Sigmoid colon (tissue), 7 donors: ENCODE measurements at regions of chr1 and their contacts with region 1.

Region 1: GRCh38 chr1:24070821-24071393 is 41.0 kb downstream of the MYOM3 start:
- DNase-seq: peak; percentile 88
- H3K4me3 ChIP-seq: no peak overlapping the region
- H3K27ac ChIP-seq: no peak overlapping the region
- H3K4me1 ChIP-seq: peaks cover 0 to 8% (median 2%) of the 10 kb centered on the region in 4 donors
- H3K27me3 ChIP-seq: no peaks in the 10 kb centered on the region
- CTCF ChIP-seq: peak; percentile 87 to 92 (median 89)
- EP300 ChIP-seq: no peak
- POLR2A ChIP-seq: no peak

Region 2: DNA sequence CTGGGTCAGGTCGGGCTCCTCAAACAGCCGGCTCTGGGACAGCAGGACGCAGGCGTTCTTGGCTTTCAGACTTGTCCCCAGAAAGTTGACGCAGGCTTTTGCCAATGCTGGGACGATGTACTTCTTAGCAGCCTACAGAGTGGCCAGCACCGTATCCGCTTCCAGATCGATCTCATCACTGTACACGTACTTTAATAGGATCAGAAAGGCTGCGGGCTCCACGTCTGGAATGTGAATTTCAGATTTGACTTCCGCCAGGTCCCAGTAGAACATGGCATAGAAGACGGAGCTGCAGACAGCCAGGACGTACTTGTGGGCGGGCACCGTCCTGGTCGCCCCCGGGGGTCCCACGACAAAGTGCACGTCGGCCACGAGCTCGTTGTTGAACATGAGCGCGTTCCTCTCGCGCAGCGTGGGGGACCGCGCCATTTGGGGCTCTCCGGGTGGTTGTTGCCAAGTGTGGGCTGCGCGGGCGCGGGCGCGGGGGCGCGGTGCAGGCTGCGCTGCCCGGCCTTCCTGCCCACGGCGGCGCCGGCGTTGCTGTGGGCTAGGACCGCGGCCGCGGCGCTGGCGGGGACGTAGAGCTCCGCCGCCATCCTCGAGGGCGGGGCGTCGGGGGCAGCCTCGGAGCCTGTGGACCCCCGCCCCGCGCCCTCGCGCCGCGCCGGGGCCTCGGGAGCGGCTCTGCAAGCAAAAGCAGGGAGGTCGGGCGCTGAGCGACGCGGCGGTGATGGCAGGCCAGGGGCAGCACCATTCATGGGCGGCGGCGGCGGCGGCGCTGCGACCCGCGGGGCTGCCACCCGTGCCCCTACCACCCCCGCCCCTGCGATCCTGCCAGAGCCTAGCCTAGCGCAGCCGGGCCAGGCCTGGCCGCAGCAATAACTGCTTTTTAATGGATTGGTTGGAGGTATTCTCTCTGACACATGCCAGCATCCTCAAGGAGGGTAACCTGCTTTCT is 168.3 kb before region 1 on chr1:
- intact Hi-C with region 1: no loop called
- DNase-seq: no peak
- H3K4me3 ChIP-seq: peak overlapping the region; percentile 12 to 56 (median 48)
- H3K27ac ChIP-seq: no peak overlapping the region
- H3K4me1 ChIP-seq: peaks cover 0 to 8% (median 7%) of the 10 kb centered on the region in 4 donors
- H3K27me3 ChIP-seq: peaks cover 3 to 20% (median 11%) of the 10 kb centered on the region in 3 donors
- CTCF ChIP-seq: no peak
- EP300 ChIP-seq: no peak
- POLR2A ChIP-seq: no peak

Region 3: GRCh38 chr1:24111996-24112779 is 41.3 kb after region 1 on chr1 and contains the start of gene MYOM3:
- intact Hi-C with region 1: loop called (anchors 1 kb)
- DNase-seq: peak; percentile 85
- H3K4me3 ChIP-seq: peak within 1 kb of the TSS in 3 of 4 donors; percentile 7 to 38 (median 32)
- H3K27ac ChIP-seq: peak within 1 kb of the TSS in 1 of 4 donors; percentile 38
- H3K4me1 ChIP-seq: peaks cover 0 to 12% (median 8%) of the 10 kb centered on the region in 4 donors
- H3K27me3 ChIP-seq: peaks cover 0 to 1% (median 0%) of the 10 kb centered on the region in 3 donors
- CTCF ChIP-seq: peak in 3 of 4 experiments; percentile 44 to 60 (median 47)
- EP300 ChIP-seq: no peak
- POLR2A ChIP-seq: no peak
- total RNA-seq, gene MYOM3: under 0.01 TPM in 2 of 4 donors, not detected in the others

Region 4: GRCh38 chr1:24142546-24143534 is 71.9 kb after region 1 on chr1 and contains the start of gene IL22RA1:
- intact Hi-C with region 1: no loop called
- DNase-seq: peak; percentile 61
- H3K4me3 ChIP-seq: peak within 1 kb of the TSS in 3 of 4 donors; percentile 23 to 33 (median 31)
- H3K27ac ChIP-seq: no peak within 1 kb of the TSS
- H3K4me1 ChIP-seq: no peaks in the 10 kb centered on the region
- H3K27me3 ChIP-seq: no peaks in the 10 kb centered on the region
- CTCF ChIP-seq: no peak
- EP300 ChIP-seq: no peak
- POLR2A ChIP-seq: peak in 1 of 2 donors; percentile 14
- total RNA-seq, gene IL22RA1: 0.16 to 0.36 TPM in 2 of 4 donors, not detected in the others

Region 5: DNA sequence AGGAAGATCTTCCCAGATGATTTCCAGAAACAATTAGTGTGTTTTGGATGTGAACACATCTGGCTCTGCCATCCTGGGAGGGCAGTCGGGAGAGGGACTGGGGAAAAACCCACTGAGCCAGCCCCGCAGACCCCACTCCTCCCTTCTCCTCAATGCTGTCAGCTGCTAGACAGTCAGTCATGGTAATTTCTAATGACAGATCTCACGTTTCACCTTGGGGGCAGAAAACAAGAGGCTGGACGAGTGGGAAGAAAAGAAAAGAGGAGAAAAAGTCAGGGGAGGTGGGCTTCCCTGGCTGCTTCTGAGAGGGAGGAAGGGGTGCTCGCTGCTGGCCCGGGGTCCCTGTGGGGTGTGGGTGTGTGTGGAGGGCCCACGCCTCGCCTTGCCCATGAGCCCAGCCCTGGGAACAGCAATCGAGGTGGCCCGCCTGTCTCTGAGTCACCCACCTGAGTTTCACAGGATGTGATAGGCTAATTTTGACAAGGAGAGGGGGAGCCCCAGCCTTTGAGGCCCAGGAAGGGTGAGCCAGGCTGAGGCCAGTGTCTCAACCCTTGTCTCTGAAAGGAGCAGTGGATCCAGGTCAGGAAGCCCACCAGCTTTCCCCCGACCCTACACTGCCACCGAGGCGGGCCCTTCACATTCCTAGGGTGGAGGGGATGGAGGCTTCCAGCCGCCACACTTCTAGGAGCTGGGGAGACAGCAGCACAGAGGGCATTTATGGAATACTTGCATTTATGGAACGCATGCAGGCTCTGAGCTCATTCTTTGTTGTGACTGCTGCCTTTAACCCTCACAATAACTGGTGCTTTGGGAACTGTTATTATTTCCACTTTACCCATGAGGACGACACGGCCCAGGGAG is 165.2 kb after region 1 on chr1:
- intact Hi-C with region 1: no loop called
- DNase-seq: no peak
- H3K4me3 ChIP-seq: no peak overlapping the region
- H3K27ac ChIP-seq: no peak overlapping the region
- H3K4me1 ChIP-seq: peaks cover 0 to 7% (median 3%) of the 10 kb centered on the region in 4 donors
- H3K27me3 ChIP-seq: no peaks in the 10 kb centered on the region
- CTCF ChIP-seq: no peak
- EP300 ChIP-seq: no peak
- POLR2A ChIP-seq: no peak

Region 6: GRCh38 chr1:24391882-24392603 is 321.1 kb after region 1 on chr1:
- intact Hi-C with region 1: loop called (anchors 2 kb)
- DNase-seq: peak; percentile 83
- H3K4me3 ChIP-seq: peak overlapping the region in 2 of 4 donors; percentile 22 to 27
- H3K27ac ChIP-seq: peak overlapping the region; percentile 75 to 84 (median 84)
- H3K4me1 ChIP-seq: peaks cover 3 to 27% (median 24%) of the 10 kb centered on the region in 4 donors
- H3K27me3 ChIP-seq: no peaks in the 10 kb centered on the region
- CTCF ChIP-seq: peak; percentile 53 to 84 (median 69)
- EP300 ChIP-seq: no peak
- POLR2A ChIP-seq: no peak